Activated naive CD4-positive, alpha-beta T cell treated with anti-CD3 and anti-CD28 coated beads for 36 hours (primary cell): ENCODE measurements at regions of chr3 and their contacts with region 1.

Region 1: GRCh38 chr3:143060906-143061305 is 58.7 kb upstream of the CHST2 start:
- DNase-seq: no peak
- H3K4me3 Mint-ChIP-seq: no peak overlapping the region
- H3K27ac Mint-ChIP-seq: no peak overlapping the region
- H3K4me1 Mint-ChIP-seq: peaks cover 27% of the 10 kb centered on the region
- H3K27me3 Mint-ChIP-seq: no peaks in the 10 kb centered on the region

Region 2: GRCh38 chr3:142723968-142724681 is 336.8 kb before region 1 on chr3 and contains the start of gene TRPC1:
- CTCF ChIA-PET with region 1: no interaction called
- intact Hi-C with region 1: loop called (anchors 5 kb)
- DNase-seq: peak; percentile 57
- H3K4me3 Mint-ChIP-seq: peak within 1 kb of the TSS; percentile 83
- H3K27ac Mint-ChIP-seq: peak within 1 kb of the TSS; percentile 82
- H3K4me1 Mint-ChIP-seq: peaks cover 10% of the 10 kb centered on the region
- H3K27me3 Mint-ChIP-seq: peaks cover 20% of the 10 kb centered on the region
- total RNA-seq, gene TRPC1: 3.1 to 4.8 TPM

Region 3: GRCh38 chr3:142875583-142876207 is 185.2 kb before region 1 on chr3:
- CTCF ChIA-PET with region 1: no interaction called
- intact Hi-C with region 1: no loop called
- DNase-seq: no peak
- H3K4me3 Mint-ChIP-seq: no peak overlapping the region
- H3K27ac Mint-ChIP-seq: no peak overlapping the region
- H3K4me1 Mint-ChIP-seq: no peaks in the 10 kb centered on the region
- H3K27me3 Mint-ChIP-seq: peaks cover 10% of the 10 kb centered on the region

Region 4: GRCh38 chr3:143081844-143082778 is 21.2 kb after region 1 on chr3:
- CTCF ChIA-PET with region 1: interaction called, 3 read pairs
- intact Hi-C with region 1: loop called (anchors 1 kb)
- DNase-seq: peak; percentile 51
- H3K4me3 Mint-ChIP-seq: peak overlapping the region; percentile 41
- H3K27ac Mint-ChIP-seq: peak overlapping the region; percentile 86
- H3K4me1 Mint-ChIP-seq: peaks cover 23% of the 10 kb centered on the region
- H3K27me3 Mint-ChIP-seq: no peaks in the 10 kb centered on the region

Region 5: GRCh38 chr3:143276592-143276991 is 215.7 kb after region 1 on chr3:
- CTCF ChIA-PET with region 1: no interaction called
- intact Hi-C with region 1: loop called (anchors 1 kb)
- DNase-seq: no peak
- H3K4me3 Mint-ChIP-seq: no peak overlapping the region
- H3K27ac Mint-ChIP-seq: no peak overlapping the region
- H3K4me1 Mint-ChIP-seq: peaks cover 17% of the 10 kb centered on the region
- H3K27me3 Mint-ChIP-seq: no peaks in the 10 kb centered on the region

Region 6: GRCh38 chr3:143348486-143349327 is 287.8 kb after region 1 on chr3:
- CTCF ChIA-PET with region 1: no interaction called
- intact Hi-C with region 1: loop called (anchors 1 kb)
- DNase-seq: no peak
- H3K4me3 Mint-ChIP-seq: no peak overlapping the region
- H3K27ac Mint-ChIP-seq: no peak overlapping the region
- H3K4me1 Mint-ChIP-seq: peaks cover 35% of the 10 kb centered on the region
- H3K27me3 Mint-ChIP-seq: no peaks in the 10 kb centered on the region